Dorsolateral prefrontal cortex (tissue), 120 donors: ENCODE measurements at regions of chr14 and their contacts with region 1.

Region 1: DNA sequence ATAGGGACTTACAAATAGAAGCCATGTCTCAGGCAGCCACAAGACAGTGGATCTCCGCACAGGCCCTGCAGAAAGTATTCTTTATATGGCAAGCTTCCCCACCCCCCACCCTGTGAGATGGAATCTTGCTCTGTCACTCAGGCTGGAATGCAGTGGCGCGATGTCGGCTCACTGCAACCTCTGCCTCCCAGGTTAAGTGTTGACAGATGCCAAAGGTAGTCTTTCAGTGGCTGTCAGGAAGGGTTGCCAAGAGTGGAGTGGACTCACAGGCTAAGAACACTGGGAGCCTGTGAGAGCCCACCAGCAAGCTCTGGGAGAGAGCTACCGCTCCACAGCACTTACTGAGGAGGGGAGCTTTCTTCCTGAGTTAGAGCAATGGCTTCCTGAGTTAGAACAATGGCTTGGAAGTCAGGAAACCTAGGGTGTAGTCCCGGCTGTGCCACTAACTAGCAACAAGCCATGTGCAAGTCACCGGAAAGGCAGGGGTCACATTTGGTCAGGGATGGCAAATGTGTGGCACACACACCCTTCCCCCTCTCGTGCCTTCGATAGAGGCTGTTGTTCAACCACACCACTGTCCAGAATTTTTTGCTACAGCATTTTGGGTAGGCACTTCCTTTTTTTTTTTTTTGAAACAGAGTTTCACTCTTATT is 2.6 kb downstream of the RNASE1 start:
- DNase-seq: peak in 2 of 10 donors; percentile 40 to 45
- H3K4me3 ChIP-seq: peak overlapping the region; percentile 9 to 79 (median 58)
- H3K27ac ChIP-seq: peak overlapping the region; percentile 81 to 100 (median 97)
- H3K27me3 ChIP-seq: no peaks in the 10 kb centered on the region
- CTCF ChIP-seq: peak in 1 of 56 donors; percentile 11

Region 2: GRCh38 chr14:20624495-20625070 is 175.4 kb before region 1 on chr14:
- intact Hi-C with region 1: loop called in 1 of 2 experiments (anchors 10 kb)
- DNase-seq: no peak
- H3K4me3 ChIP-seq: peak overlapping the region in 46 of 59 donors; percentile 2 to 59 (median 30)
- H3K27ac ChIP-seq: peak overlapping the region in 1 of 59 donors; percentile 32
- H3K27me3 ChIP-seq: peaks cover 0 to 67% (median 21%) of the 10 kb centered on the region in 45 donors
- CTCF ChIP-seq: no peak

Region 3: DNA sequence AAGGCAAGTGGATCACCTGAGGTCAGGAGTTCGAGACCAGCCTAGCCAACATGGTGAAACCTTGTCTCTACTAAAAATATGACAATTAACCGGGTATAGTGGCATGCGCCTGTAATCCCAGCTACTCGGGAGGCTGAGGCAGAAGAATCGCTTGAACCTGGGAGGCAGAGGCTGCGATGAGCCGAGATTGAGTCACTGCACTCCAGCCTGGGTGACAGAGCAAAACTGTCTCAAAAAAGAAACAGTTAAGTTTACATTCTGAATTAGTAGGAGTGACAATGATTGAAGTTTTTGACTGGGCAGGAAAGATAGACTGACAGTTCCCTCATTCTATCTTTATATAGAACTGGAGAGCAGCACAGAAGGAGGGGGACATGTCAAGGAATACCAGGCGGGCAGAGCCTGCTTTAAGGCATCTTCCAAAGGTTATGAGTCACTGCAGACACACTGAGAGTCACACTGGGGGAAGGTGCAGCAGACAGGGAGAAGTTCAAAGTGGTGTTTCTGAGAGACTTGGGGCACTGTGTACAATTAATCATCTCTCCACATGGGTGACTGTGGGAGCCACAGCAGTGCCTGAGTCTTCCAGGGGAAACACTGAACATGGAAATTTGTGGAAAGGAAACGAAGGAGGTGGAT is 48.4 kb after region 1 on chr14:
- intact Hi-C with region 1: loop called in 1 of 2 experiments (anchors 5 kb)
- DNase-seq: no peak
- H3K4me3 ChIP-seq: peak overlapping the region in 3 of 59 donors; percentile 2 to 15 (median 13)
- H3K27ac ChIP-seq: peak overlapping the region in 54 of 59 donors; percentile 9 to 85 (median 70)
- H3K27me3 ChIP-seq: no peaks in the 10 kb centered on the region
- CTCF ChIP-seq: no peak

Region 4: GRCh38 chr14:20956376-20956976 is 156.5 kb after region 1 on chr14:
- intact Hi-C with region 1: no loop called
- DNase-seq: no peak
- H3K4me3 ChIP-seq: no peak overlapping the region
- H3K27ac ChIP-seq: no peak overlapping the region
- H3K27me3 ChIP-seq: peaks cover 0 to 31% (median 0%) of the 10 kb centered on the region in 45 donors
- CTCF ChIP-seq: no peak